Mammary epithelial cell (primary cell): ENCODE measurements at regions of chr12 and their contacts with region 1.

Region 1: GRCh38 chr12:52495389-52495788 is 2.3 kb upstream of the KRT6A start:
- DNase-seq: peak; percentile 72
- H3K4me3 ChIP-seq: no peak overlapping the region
- H3K27ac ChIP-seq: peak overlapping the region; percentile 99
- H3K4me1 ChIP-seq: peaks cover 69% of the 10 kb centered on the region
- H3K27me3 ChIP-seq: no peaks in the 10 kb centered on the region
- CTCF ChIP-seq: peak in 1 of 2 donors; percentile 31

Region 2: DNA sequence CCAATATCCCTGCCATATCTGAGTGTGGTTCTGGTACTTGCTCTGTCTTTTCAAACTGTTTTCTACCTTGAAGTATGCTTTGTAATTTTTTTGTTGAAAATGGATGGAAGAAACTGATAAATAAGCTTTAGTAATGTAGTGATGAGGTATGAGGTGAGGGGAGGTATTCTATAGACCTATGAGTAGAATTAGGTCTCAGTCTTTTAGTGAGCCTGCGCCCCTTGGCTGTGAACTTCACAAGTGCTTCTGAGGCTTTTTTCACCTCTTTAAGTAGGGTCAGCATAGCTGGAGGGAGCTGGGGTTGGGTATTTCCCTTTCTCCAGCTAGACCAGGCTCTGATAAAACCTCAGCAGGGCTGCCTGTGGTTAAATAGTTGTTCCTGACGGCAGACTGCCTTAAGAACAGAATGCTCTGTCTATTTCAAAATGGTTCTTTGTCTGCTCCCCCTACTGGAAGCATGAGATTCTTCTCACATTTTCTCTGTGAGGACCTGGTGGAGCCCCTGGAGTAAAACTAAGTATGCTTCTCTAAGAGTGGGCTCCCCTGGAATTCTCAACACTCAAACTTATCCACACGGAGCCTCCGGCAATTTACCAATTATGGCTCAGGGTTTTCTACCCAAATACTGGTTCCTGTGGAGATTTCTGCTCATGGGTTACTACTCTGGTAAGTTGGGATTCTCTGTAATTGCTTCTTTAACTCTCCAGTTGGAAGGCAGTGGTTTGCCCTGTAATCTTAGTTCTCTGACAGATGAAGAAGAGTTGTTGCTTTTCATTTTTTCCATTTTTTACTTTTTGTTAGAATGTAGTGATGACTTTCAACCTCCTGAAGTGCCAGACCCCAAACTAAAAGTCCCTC is 11.7 kb after region 1 on chr12:
- CTCF ChIA-PET with region 1: interaction called, 5 read pairs
- dilution Hi-C with region 1: no loop called
- in situ Hi-C with region 1: no loop called
- intact Hi-C with region 1: loop called (anchors 1 kb)
- DNase-seq: peak; percentile 82
- H3K4me3 ChIP-seq: no peak overlapping the region
- H3K27ac ChIP-seq: peak overlapping the region; percentile 40
- H3K4me1 ChIP-seq: peaks cover 21% of the 10 kb centered on the region
- H3K27me3 ChIP-seq: no peaks in the 10 kb centered on the region
- CTCF ChIP-seq: peak; percentile 58 to 72

Region 3: DNA sequence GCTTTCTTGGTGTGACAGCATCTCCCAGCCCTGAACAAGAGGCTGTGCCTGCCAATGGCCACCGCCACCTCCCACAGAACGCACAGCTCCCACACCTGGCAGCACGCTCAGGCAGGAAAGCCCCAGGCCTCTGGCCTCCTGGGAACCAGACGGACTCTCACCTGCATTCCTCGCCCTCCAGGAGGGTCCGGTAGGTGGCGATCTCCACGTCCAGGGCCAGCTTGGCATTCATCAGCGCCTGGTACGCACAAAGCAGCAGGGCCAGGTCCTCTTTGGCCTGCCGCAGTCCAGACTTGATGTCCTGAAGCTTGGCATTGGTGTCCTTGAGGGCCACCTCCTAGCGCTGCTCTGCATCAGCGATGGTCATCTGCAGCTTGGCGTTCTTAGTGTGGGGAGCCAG is 220.0 kb after region 1 on chr12:
- CTCF ChIA-PET with region 1: no interaction called
- dilution Hi-C with region 1: no loop called
- in situ Hi-C with region 1: no loop called
- intact Hi-C with region 1: no loop called
- DNase-seq: peak; percentile 4
- H3K4me3 ChIP-seq: no peak overlapping the region
- H3K27ac ChIP-seq: no peak overlapping the region
- H3K4me1 ChIP-seq: no peaks in the 10 kb centered on the region
- H3K27me3 ChIP-seq: peaks cover 21% of the 10 kb centered on the region
- CTCF ChIP-seq: no peak